ENCODE measurements at regions of chr17 and their contacts with region 1.

Region 1: GRCh38 chr17:79839363-79840268 is at the start of gene CBX4:
- DNase-seq: peak; percentile 96
- H3K4me3 ChIP-seq: peak within 1 kb of the TSS; percentile 59
- H3K27ac ChIP-seq: peak within 1 kb of the TSS; percentile 96
- H3K4me1 ChIP-seq: peaks cover 45% of the 10 kb centered on the region
- H3K27me3 ChIP-seq: peaks cover 43% of the 10 kb centered on the region
- CTCF ChIP-seq: peak; percentile 84
- total RNA-seq, gene CBX4: 10.6 to 18.1 TPM

Region 2: DNA sequence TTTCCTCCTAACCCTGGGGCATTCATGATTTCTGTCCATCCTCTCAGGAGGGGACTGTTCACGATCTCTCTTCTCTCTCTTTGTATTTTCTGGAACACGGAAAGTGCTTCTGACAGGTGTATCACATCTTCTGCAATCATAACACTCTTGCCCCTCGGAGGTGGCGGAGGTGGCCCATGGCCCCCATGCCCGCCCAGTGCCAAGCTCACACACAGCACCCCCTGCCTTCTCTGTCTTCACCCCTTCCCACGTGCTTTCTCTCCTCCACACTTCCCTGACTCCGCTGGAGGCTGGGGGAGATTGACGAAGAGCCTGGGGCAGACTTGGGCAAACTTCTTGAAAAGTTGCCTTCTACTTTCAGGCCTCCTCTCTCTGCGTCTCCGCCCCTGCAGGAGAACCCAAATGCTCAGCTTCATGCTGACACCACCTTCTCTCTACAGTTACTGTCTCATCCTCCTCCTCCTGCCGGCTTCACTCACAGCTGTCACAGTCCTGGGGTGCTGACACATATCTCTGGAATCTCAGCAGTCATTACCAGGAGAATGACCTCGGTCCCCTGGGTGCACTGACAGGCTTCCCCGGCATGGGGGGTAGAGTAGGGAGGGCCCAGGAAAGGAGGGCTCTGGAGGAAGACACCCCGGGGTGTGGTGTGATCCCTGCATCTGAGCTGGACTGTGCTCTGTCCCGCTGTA is 637.9 kb before region 1 on chr17:
- intact Hi-C with region 1: no loop called
- DNase-seq: no peak
- H3K4me3 ChIP-seq: no peak overlapping the region
- H3K27ac ChIP-seq: no peak overlapping the region
- H3K4me1 ChIP-seq: no peaks in the 10 kb centered on the region
- H3K27me3 ChIP-seq: no peaks in the 10 kb centered on the region
- CTCF ChIP-seq: no peak

Region 3: GRCh38 chr17:79808763-79809529 is 30.7 kb before region 1 on chr17:
- intact Hi-C with region 1: loop called (anchors 5 kb)
- DNase-seq: peak; percentile 61
- H3K4me3 ChIP-seq: no peak overlapping the region
- H3K27ac ChIP-seq: no peak overlapping the region
- H3K4me1 ChIP-seq: peaks cover 24% of the 10 kb centered on the region
- H3K27me3 ChIP-seq: peaks cover 78% of the 10 kb centered on the region
- CTCF ChIP-seq: peak; percentile 28

Region 4: GRCh38 chr17:79915850-79916430 is 76.3 kb after region 1 on chr17:
- intact Hi-C with region 1: loop called (anchors 5 kb)
- DNase-seq: peak; percentile 83
- H3K4me3 ChIP-seq: no peak overlapping the region
- H3K27ac ChIP-seq: no peak overlapping the region
- H3K4me1 ChIP-seq: peaks cover 11% of the 10 kb centered on the region
- H3K27me3 ChIP-seq: no peaks in the 10 kb centered on the region
- CTCF ChIP-seq: no peak

Region 5: DNA sequence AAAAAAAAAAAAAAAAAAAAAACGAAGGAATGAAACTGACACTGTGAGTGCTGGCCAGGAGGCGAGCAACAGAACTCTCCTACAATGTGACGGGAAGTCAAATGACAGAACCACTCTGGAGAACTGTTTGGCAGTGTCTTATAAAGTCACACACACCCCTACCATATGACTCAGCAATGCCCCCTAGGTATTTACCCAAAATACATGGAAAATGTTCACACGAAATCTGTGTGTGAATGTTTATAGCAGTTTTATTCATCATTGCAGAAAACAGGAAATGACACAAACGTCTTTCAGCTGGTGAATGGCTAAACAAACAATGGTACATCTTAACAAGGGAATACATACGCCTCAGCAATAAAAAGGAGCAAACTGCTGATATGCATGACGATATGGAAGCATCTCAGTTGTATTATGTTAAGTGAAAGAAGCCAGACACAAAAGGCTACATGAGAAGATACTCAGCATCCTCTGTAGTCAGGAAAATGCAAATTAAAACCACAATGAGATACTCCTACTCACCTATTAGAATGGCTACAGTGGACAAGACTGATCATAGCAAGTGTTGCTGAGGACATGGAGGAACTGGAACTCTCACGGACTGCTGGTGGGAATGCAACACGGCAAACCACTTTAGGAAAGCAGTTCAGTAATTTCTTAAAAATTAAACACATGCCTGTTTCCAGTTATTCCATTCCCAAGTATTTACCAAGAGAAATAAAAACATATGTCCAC is 121.3 kb after region 1 on chr17:
- intact Hi-C with region 1: no loop called
- DNase-seq: no peak
- H3K4me3 ChIP-seq: no peak overlapping the region
- H3K27ac ChIP-seq: no peak overlapping the region
- H3K4me1 ChIP-seq: no peaks in the 10 kb centered on the region
- H3K27me3 ChIP-seq: no peaks in the 10 kb centered on the region
- CTCF ChIP-seq: no peak

Measured in colonic mucosa (tissue), 4 donors.